ENCODE measurements at regions of chr1 and their contacts with region 1.

Region 1: DNA sequence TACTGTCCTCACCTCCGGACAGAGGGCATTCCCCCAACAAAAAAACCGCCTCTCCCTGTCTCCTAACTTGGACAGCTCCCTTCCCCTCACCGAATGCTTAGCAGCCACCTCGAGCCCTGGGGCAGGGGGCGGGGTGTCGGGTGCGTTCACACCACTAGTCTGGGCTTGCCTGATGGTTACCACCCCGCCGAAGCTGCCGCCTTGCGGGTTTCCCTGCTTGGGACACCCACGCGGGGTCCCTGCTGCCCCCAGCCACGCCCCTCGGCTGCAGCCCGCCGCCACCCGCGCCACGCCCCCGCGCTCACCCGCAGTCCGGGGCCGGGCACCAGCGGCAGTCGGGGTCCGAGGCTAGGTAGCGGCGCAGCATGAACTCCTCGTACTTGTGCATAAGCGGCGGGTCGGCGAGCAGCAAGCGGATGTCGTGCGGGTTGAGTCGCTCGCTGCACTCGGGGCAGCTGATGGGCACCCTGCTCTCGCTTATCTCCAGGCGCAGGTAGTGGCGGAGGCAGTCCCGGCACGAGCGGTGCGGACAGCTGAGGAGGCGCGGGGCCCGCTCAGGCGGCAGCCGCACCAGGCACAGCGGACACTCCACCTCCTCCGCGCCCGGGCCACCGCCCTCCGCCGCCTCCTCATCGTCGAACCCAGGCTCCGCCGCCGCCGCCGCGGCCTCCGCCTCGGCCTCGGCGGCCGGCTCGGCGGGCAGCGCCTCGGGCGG is 706 bp downstream of the RNF19B start:
- DNase-seq: peak; percentile 58 to 74
- H3K4me3 ChIP-seq: peak overlapping the region; percentile 97
- H3K27ac ChIP-seq: 0 out of 2 replicates have a peak overlapping the region, but pooled peaks have one; percentile 18
- H3K4me1 ChIP-seq: peaks cover 36% of the 10 kb centered on the region
- H3K27me3 ChIP-seq: no peaks in the 10 kb centered on the region
- CTCF ChIP-seq: no peak

Region 2: GRCh38 chr1:32907439-32907838 is 56.5 kb before region 1 on chr1:
- CTCF ChIA-PET with region 1: no interaction called
- POLR2A ChIA-PET with region 1: no interaction called
- intact Hi-C with region 1: no loop called
- DNase-seq: no peak
- H3K4me3 ChIP-seq: no peak overlapping the region
- H3K27ac ChIP-seq: no peak overlapping the region
- H3K4me1 ChIP-seq: no peaks in the 10 kb centered on the region
- H3K27me3 ChIP-seq: no peaks in the 10 kb centered on the region
- CTCF ChIP-seq: no peak

Region 3: DNA sequence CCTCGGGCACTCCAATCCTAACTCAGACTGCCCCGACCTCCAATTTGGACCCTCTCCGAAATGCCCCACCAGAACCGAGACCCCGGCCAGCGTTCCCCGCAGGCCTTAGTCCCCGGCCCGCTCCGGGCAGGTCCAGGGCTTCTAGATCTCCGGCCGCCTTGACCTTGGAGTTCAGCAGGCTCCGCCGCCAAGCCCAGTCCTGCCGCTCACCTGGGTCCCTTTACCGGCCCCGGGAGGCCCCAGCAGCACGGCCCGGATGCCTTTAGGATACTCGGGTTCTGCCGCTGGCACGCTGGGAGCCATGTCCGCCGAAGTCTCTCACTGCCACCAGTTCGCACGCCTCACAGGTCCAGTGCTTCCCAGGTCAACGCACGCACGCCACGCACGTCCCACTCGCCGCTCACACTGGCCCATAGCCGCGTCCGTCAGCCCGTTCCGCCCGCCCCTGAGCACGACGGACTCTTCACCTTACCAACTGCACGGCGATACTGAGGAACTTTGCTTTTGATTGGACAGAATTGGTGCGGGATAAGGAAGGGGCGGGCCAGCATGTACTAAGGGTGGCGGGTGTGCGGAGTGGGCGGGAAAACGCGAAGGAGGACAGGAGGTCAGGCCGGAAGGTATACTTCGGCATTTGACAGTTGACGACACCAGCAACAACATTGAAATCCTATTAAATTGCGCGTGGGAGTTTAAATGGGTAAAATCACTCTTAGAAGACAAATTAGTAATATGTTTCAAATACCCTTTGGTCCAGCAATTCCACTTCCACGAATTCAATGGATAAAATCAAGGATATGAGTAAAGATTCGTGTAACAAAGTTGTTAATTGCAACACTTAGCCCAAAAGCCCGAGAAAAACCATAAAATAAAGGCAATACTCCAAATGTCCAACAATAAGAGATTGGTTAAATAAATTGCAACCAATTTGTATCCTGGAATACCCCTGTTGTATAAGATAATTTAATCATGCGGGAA is 72.9 kb after region 1 on chr1 and contains the start of gene AK2:
- CTCF ChIA-PET with region 1: no interaction called
- POLR2A ChIA-PET with region 1: interaction called, 10 read pairs
- intact Hi-C with region 1: no loop called
- DNase-seq: peak; percentile 94 to 96
- H3K4me3 ChIP-seq: peak within 1 kb of the TSS; percentile 86
- H3K27ac ChIP-seq: peak within 1 kb of the TSS; percentile 74
- H3K4me1 ChIP-seq: peaks cover 8% of the 10 kb centered on the region
- H3K27me3 ChIP-seq: no peaks in the 10 kb centered on the region
- CTCF ChIP-seq: no peak
- total RNA-seq, gene AK2: 191 and 232 TPM in 2 replicates

Measured in PC-9 (cell line).